AG04450 (cell line): ENCODE measurements at regions of chr22 and their contacts with region 1.

Region 1: DNA sequence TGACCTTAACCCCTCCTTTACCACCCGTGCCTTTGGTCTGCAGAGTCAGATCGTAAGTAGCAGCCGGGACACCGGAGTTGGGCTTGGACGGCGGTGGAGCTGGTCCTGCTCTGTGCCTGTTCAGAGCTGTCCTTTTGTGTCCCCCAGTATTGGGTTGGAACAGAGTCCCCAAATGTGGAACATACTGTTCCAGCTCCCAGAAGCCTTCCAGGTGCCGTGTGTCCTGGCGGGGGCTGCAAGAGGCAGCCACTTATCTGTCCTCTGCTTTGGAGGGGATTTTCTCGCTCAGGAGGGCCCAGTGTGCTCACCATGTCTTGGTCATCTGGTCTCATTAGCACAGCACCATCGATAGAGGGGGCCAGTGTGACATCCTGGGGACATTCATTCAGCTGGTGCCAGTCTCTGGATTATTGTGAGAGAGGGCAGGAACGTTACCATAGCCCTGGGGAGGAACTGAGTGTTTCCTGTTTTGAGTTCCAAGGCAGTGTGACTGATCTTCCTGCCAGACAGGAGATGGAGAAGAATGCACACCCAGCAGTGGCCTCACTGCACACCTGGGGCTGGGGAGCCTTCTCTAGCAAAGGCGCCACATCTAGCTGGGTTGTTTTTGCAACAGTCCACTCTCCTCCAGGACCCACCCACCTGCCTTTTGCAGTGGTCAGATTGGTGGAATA is 12.4 kb downstream of the CRELD2 start:
- DNase-seq: no peak
- H3K4me3 ChIP-seq: no peak overlapping the region
- H3K27ac ChIP-seq: no peak overlapping the region
- H3K27me3 ChIP-seq: no peaks in the 10 kb centered on the region
- CTCF ChIP-seq: peak; percentile 46

Region 2: GRCh38 chr22:50018608-50019285 is 87.9 kb after region 1 on chr22:
- CTCF ChIA-PET with region 1: no interaction called
- POLR2A ChIA-PET with region 1: no interaction called
- DNase-seq: no peak
- H3K4me3 ChIP-seq: no peak overlapping the region
- H3K27ac ChIP-seq: no peak overlapping the region
- H3K27me3 ChIP-seq: peaks cover 38% of the 10 kb centered on the region
- CTCF ChIP-seq: no peak

Region 3: GRCh38 chr22:50030297-50031188 is 99.7 kb after region 1 on chr22:
- CTCF ChIA-PET with region 1: interaction called, 28 read pairs
- POLR2A ChIA-PET with region 1: no interaction called
- DNase-seq: peak; percentile 11
- H3K4me3 ChIP-seq: no peak overlapping the region
- H3K27ac ChIP-seq: no peak overlapping the region
- H3K27me3 ChIP-seq: peaks cover 9% of the 10 kb centered on the region
- CTCF ChIP-seq: peak; percentile 83